ENCODE measurements at regions of chr18 and their contacts with region 1.

Region 1: DNA sequence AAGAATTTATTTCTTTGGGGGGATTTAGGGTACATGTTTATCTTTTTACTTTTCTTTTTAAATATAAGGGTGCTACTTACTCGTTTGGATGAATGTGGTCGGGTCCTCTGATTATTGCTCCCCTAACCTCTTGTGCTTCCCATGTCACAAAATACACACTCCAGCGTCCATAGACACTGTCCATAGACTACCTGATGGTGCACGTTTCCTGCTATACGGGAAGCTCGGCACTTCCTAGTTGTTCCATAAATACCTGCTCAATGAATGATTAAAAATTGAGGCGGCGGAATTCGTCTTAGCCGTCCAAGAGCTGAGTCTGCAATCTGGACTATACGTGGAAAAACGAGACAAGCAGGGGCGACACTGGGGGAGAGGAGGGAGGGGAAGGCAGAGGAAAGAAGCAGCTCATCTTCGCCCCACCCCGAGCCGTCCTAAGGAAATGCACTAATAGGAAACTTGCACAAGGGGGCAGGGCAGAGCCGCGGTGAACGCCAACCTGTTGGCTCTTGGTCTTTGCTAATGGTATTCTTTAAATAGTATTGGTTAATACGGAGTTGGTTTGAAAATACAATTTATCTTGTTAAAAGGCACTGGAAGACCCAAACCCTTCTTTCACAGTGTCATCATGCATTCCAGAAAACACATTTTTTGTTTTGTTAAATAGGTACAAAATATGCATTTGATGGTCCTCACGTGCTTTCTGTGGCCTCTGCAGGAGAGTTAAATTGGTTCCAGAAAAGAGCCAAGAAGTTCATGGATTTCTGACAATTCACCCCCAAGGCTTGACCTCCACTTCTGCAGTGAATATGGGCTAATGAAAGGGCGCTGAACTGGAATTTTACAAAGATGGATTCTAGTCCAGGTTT is 73.0 kb upstream of the KCTD1 start:
- DNase-seq: peak; percentile 77
- H3K4me3 Mint-ChIP-seq: peak overlapping the region; percentile 66
- H3K27ac Mint-ChIP-seq: no peak overlapping the region
- H3K4me1 Mint-ChIP-seq: peaks cover 9% of the 10 kb centered on the region
- H3K27me3 Mint-ChIP-seq: no peaks in the 10 kb centered on the region
- CTCF ChIP-seq: peak; percentile 75

Region 2: GRCh38 chr18:26207937-26208336 is 413.5 kb before region 1 on chr18:
- CTCF ChIA-PET with region 1: no interaction called
- POLR2A ChIA-PET with region 1: no interaction called
- intact Hi-C with region 1: no loop called
- DNase-seq: no peak
- H3K4me3 Mint-ChIP-seq: no peak overlapping the region
- H3K27ac Mint-ChIP-seq: no peak overlapping the region
- H3K4me1 Mint-ChIP-seq: peaks cover 6% of the 10 kb centered on the region
- H3K27me3 Mint-ChIP-seq: no peaks in the 10 kb centered on the region
- CTCF ChIP-seq: no peak

Region 3: DNA sequence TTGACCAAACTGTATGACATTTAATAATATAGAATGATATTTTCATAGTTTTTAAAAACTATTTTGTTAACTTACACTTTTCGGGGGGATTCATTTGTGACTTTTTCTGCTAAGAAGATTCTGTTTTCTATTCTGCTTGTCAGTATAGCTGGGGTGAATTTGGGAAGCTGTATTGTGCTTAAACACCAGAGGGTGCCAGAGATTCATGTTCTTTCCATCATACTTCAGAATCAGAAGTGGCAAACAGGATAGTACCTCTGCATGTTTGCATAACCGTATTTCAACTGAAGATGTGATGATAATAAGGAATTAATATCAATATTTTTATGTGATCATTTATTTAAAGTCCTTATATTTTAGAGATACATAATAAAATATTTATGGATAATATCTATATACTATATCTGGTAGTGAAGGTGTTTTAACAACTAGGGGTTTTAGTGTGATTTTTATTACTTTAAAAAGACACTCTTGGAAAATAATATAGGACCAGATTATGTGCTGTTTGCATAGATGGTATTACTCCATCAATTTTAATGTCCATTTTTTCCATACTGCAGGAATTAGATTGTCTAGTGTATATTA is 314.1 kb before region 1 on chr18:
- CTCF ChIA-PET with region 1: interaction called, 8 read pairs
- POLR2A ChIA-PET with region 1: interaction called, 4 read pairs
- intact Hi-C with region 1: loop called (anchors 1 kb)
- DNase-seq: peak; percentile 65
- H3K4me3 Mint-ChIP-seq: no peak overlapping the region
- H3K27ac Mint-ChIP-seq: no peak overlapping the region
- H3K4me1 Mint-ChIP-seq: no peaks in the 10 kb centered on the region
- H3K27me3 Mint-ChIP-seq: no peaks in the 10 kb centered on the region
- CTCF ChIP-seq: peak; percentile 59

Region 4: GRCh38 chr18:26650310-26651268 is 29.2 kb after region 1 on chr18:
- CTCF ChIA-PET with region 1: interaction called, 54 read pairs
- POLR2A ChIA-PET with region 1: no interaction called
- intact Hi-C with region 1: loop called (anchors 1 kb)
- DNase-seq: no peak
- H3K4me3 Mint-ChIP-seq: no peak overlapping the region
- H3K27ac Mint-ChIP-seq: no peak overlapping the region
- H3K4me1 Mint-ChIP-seq: peaks cover 5% of the 10 kb centered on the region
- H3K27me3 Mint-ChIP-seq: peaks cover 15% of the 10 kb centered on the region
- CTCF ChIP-seq: no peak

Region 5: GRCh38 chr18:26771524-26771923 is 150.1 kb after region 1 on chr18:
- CTCF ChIA-PET with region 1: interaction called, 4 read pairs
- POLR2A ChIA-PET with region 1: no interaction called
- intact Hi-C with region 1: loop called (anchors 1 kb)
- DNase-seq: peak; percentile 46
- H3K4me3 Mint-ChIP-seq: no peak overlapping the region
- H3K27ac Mint-ChIP-seq: no peak overlapping the region
- H3K4me1 Mint-ChIP-seq: peaks cover 5% of the 10 kb centered on the region
- H3K27me3 Mint-ChIP-seq: no peaks in the 10 kb centered on the region
- CTCF ChIP-seq: peak; percentile 30

Region 6: DNA sequence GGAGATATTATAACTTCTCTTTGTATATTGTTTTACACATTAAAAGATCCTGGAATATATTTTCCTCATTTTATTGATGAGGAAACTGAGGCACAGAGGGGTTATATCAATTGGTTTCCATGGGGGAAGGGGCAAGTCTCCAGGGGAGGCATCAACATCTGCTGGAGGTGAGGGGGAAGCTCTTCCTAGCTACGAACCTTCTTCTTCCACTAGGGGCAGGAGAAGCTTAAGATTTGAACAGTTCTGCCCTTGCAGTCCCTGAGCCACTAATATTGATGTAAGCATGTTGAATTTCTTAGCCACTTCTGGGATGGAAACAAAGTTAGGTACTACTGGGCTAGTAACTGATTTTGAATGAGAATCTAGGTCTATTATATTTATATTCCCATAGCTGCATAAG is 384.2 kb after region 1 on chr18:
- CTCF ChIA-PET with region 1: interaction called, 26 read pairs
- POLR2A ChIA-PET with region 1: no interaction called
- intact Hi-C with region 1: loop called (anchors 2 kb)
- DNase-seq: peak; percentile 35
- H3K4me3 Mint-ChIP-seq: no peak overlapping the region
- H3K27ac Mint-ChIP-seq: no peak overlapping the region
- H3K4me1 Mint-ChIP-seq: no peaks in the 10 kb centered on the region
- H3K27me3 Mint-ChIP-seq: peaks cover 12% of the 10 kb centered on the region
- CTCF ChIP-seq: peak; percentile 28